ENCODE measurements at regions of chr7 and their contacts with region 1.

Region 1: DNA sequence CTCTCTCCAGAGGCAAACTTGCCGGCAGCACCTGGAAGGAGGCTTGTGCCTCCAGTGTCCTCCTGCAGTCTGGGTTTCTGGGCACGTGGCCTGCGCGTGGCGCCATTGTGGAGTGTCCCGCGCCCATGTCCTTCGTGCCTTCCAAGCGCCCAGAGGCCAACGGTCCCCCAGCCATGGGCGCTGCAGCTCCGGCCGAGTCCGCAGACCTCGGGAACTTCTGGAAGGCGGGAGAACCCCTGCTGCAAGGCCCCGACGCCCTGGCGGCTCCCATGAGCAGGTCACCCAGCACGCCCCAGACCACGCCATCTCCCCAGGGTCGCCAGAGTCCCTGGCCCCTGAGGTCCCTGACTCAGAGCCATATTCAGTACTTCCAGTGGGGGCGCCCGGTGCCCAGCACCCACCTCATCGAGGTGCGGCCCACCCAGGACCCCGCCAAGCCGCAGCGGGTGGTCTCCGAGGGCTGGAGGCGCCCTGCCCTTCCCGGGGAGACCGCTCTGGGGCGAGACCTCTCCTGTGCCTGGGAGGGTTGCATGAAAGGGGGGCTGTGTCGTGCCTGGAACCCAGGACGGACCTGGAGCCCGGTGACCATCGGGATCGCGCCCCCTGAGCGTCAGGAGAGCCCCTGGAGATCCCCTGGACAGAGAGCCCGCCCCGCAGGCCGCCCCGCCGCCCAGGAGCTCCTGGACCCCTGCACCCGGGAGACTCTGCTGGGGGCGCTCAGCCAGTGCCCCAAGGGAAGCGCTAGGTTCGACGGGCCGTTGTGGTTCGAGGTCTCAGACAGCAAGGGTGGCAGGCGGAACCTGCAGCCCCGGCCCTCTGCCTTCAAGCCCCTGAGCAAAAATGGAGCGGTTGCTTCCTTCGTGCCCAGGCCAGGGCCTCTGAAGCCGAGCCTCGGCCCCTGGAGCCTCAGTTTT is at the start of gene POM121L12:
- DNase-seq: no peak
- H3K27ac ChIP-seq: no peak within 1 kb of the TSS
- CTCF ChIP-seq: no peak

Region 2: DNA sequence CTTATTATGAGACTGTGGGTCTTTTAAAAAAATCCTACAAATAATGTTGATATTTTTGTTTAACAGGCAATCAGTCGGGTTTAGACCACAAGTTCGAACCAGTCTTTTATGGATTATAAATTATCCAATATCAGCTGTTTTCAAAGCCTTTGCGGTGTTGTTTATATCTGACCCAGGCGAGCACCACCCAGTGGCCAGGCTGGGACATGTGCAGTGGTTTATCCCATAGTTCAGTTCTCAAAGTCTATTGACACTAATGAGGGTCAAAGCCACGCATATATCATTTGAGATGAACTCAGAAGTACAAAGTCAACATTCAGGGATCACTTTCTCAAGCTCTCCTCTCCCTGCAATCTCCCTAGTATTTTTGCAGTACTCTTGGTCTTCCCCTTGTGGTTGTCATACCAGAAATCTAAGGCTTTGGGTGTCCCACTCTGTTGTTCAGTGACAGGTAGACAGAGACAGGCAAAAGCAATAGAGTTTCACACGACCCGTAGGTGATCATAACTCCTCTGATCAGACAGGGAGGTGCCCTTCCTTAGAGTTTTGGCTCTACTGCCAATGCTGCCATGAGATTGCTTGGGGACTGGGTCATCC is 117.7 kb before region 1 on chr7:
- CTCF ChIA-PET with region 1: interaction called, 10 read pairs
- POLR2A ChIA-PET with region 1: no interaction called
- DNase-seq: peak; percentile 7
- H3K27ac ChIP-seq: no peak overlapping the region
- CTCF ChIP-seq: peak; percentile 20; the same call in 1 of the 2 replicates

Region 3: DNA sequence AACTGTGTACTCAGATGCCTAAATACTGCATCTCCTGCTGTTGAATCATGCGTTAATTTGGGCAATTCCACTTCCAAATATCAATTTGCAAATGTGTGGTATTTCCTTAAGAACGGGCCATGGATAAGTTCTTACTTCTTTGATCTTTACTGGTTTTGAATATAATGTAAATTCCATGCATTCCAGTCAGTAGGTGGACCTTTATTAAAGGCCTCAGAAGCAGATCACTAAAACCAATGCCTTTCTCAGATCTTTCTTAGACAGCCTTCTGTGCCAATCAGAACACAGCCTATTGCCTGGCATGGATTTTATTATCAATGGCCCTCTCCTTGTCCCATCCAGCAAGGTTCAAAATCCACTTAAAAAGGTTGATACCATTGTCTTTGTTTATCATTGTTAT is 21.8 kb before region 1 on chr7:
- CTCF ChIA-PET with region 1: no interaction called
- POLR2A ChIA-PET with region 1: no interaction called
- DNase-seq: no peak
- H3K27ac ChIP-seq: no peak overlapping the region
- CTCF ChIP-seq: no peak

Region 4: GRCh38 chr7:53070883-53071282 is 35.1 kb after region 1 on chr7:
- CTCF ChIA-PET with region 1: no interaction called
- POLR2A ChIA-PET with region 1: no interaction called
- DNase-seq: no peak
- H3K27ac ChIP-seq: no peak overlapping the region
- CTCF ChIP-seq: no peak